ENCODE measurements at regions of chr15 and their contacts with region 1.

Region 1: GRCh38 chr15:57565311-57565710 is 26.4 kb upstream of the MYZAP start:
- DNase-seq: no peak
- H3K4me3 ChIP-seq: no peak overlapping the region
- H3K27ac ChIP-seq: no peak overlapping the region
- H3K4me1 ChIP-seq: peaks cover 15% of the 10 kb centered on the region
- H3K27me3 ChIP-seq: no peaks in the 10 kb centered on the region
- CTCF ChIP-seq: no peak
- POLR2A ChIP-seq: no peak

Region 2: GRCh38 chr15:57732526-57733331 is 167.4 kb after region 1 on chr15:
- intact Hi-C with region 1: loop called (anchors 5 kb)
- DNase-seq: peak; percentile 79
- H3K4me3 ChIP-seq: no peak overlapping the region
- H3K27ac ChIP-seq: no peak overlapping the region
- H3K4me1 ChIP-seq: no peaks in the 10 kb centered on the region
- H3K27me3 ChIP-seq: no peaks in the 10 kb centered on the region
- CTCF ChIP-seq: peak; percentile 71 to 83 (median 73)
- POLR2A ChIP-seq: no peak

Measured in testis (tissue), 5 donors.